Activated CD4-positive, alpha-beta T cell treated with anti-CD3 and anti-CD28 coated beads for 36 hours (primary cell): ENCODE measurements at regions of chr6 and their contacts with region 1.

Region 1: DNA sequence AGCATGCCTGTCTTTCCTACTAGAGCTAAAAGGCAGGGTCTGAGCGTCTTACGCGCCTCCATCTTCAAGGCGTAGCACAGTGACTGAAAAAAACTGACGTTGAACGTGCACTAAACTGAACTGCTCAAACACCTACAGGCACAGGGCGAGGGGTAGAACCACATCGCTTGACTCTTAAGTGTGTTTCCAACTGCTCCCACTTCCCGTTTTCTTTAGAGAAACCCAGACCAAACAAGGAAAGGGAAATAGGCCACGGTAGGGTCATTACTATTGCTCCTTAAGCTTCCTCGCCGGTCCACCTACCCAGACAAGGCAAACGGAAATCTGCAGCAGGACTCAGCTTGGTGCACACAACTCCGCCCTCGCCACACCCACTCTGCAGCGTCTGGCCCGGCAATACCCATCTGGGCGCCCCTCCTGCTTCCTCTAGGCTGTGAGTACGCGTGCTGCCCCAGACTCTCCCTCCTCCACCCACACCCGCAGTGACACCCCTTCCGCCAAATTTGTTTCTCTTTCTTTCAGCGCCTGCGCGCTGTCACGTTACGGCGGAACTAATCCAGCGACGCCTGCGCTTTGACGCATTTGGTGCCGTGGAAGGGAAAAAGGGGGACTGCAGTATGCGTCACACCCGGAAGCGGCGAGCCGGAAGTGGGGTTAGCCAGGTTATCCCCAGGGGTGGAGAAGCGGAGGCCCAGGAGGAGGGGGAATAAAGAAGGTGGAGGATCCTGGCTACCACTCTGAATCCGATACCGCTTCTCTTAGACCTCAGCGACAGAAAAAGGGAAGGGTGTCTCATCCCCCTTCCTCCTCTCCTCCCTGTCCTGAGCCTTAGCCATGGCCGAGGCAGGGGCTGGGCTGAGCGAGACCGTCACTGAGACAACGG is at the start of gene PPP1R11:
- DNase-seq: peak; percentile 99
- ATAC-seq: peak; percentile 98
- H3K4me3 Mint-ChIP-seq: peak within 1 kb of the TSS; percentile 86
- H3K27ac Mint-ChIP-seq: peak within 1 kb of the TSS; percentile 97
- H3K4me1 Mint-ChIP-seq: peaks cover 53% of the 10 kb centered on the region
- H3K27me3 Mint-ChIP-seq: peaks cover 7% of the 10 kb centered on the region
- total RNA-seq, gene PPP1R11: 47.8 to 59.9 TPM

Region 2: DNA sequence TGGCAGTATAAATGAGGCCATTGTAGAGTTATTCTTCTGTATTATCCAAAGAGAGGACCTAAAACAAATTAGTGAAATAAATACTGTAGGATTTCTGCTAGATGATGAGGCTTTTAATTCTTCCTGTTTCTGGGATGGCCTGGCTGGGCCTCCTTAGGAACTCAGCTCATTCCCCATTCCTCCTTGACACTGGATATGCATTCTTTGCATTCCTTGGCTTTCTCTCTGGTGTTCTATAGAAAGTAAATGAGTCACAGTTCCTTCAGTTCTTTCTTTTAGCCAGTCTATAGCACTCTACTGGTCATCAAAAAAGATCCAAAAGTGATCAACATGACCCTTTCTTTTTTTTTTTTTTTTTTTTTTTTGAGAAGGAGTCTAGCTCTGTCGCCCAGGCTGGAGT is 619.1 kb before region 1 on chr6:
- CTCF ChIA-PET with region 1: no interaction called
- POLR2A ChIA-PET with region 1: no interaction called
- intact Hi-C with region 1: no loop called
- DNase-seq: no peak
- ATAC-seq: no peak
- H3K4me3 Mint-ChIP-seq: no peak overlapping the region
- H3K27ac Mint-ChIP-seq: no peak overlapping the region
- H3K4me1 Mint-ChIP-seq: no peaks in the 10 kb centered on the region
- H3K27me3 Mint-ChIP-seq: peaks cover 55% of the 10 kb centered on the region

Region 3: DNA sequence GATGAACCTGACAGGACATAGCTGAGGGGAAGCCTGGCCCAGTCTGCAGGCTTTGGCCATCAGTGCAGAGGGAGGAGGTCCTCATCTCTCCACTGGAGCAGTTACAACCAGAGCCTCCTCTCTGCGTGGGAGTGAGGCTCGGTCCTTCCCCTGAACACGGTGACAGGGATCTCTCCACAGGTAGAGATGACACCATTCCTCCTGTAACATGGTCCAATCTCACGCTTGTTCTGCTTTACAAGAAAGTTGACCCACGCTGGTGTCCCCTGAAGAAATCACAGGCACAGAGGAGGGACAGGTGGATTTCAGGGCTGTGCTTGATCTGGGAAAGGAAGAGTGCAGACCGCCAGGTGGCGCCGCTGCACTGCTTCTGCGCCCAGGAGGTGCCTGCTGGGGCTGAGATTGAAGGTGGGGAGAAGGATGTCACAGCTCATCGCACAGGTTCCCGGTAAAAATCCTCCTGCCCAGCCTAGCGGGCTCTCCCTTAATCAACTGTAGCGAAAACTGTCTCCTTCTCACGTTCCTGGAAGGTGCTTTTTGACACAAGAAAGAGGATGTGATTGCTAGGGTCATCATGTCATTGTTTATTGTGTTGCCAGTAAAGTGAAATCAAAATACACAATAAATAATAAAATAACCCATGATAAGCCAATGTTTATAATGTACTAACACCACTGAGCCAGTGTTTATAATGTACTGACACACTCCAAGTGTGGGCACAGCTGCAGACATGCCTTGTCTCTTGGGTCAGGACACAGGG is 218.8 kb before region 1 on chr6:
- CTCF ChIA-PET with region 1: no interaction called
- POLR2A ChIA-PET with region 1: no interaction called
- intact Hi-C with region 1: loop called in 1 of 2 experiments (anchors 1 kb)
- DNase-seq: peak; percentile 91
- ATAC-seq: peak; percentile 74
- H3K4me3 Mint-ChIP-seq: no peak overlapping the region
- H3K27ac Mint-ChIP-seq: no peak overlapping the region
- H3K4me1 Mint-ChIP-seq: peaks cover 25% of the 10 kb centered on the region
- H3K27me3 Mint-ChIP-seq: peaks cover 44% of the 10 kb centered on the region

Region 4: DNA sequence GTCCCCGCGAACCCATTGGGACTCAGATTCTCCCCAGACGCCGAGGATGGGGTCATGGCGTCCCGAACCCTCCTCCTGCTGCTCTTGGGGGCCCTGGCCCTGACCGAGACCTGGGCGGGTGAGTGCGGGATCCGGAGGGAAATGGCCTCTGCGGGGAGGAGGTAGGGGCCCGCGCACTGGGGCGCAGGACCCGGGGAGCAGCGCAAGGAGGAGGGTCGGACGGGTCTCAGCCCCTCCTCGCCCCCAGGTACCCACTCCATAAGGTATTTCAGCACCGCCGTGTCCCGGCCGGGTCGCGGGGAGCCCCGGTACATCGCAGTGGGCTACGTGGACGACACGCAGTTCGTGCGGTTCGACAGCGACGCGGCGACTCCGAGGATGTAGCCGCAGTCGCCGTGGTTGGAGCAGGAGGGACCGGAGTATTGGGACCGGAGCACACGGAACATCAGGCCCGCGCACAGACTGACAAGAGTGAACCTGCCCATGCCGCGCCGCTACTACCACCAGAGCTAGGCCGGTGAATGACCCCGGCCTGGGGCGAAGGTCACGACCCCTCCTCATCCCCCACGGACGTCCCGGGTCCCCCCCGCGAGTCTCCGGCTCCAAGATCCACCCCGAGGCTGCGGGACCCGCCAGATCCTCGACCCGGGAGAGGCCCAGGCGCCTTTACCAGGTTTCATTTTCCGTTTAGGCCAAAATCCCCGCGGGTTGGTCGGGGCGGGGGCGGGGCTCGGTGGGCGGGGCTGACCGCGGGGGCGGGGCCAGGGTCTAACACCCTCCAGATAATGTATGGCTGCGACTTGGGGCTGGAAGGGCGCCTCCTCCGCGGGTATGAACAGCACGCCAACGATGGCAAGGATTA is 140.2 kb before region 1 on chr6:
- CTCF ChIA-PET with region 1: no interaction called
- POLR2A ChIA-PET with region 1: no interaction called
- intact Hi-C with region 1: loop called in 1 of 2 experiments (anchors 2 kb)
- DNase-seq: peak; percentile 92
- ATAC-seq: peak; percentile 91
- H3K4me3 Mint-ChIP-seq: peak overlapping the region; percentile 82
- H3K27ac Mint-ChIP-seq: peak overlapping the region; percentile 94
- H3K4me1 Mint-ChIP-seq: peaks cover 32% of the 10 kb centered on the region
- H3K27me3 Mint-ChIP-seq: no peaks in the 10 kb centered on the region

Region 5: DNA sequence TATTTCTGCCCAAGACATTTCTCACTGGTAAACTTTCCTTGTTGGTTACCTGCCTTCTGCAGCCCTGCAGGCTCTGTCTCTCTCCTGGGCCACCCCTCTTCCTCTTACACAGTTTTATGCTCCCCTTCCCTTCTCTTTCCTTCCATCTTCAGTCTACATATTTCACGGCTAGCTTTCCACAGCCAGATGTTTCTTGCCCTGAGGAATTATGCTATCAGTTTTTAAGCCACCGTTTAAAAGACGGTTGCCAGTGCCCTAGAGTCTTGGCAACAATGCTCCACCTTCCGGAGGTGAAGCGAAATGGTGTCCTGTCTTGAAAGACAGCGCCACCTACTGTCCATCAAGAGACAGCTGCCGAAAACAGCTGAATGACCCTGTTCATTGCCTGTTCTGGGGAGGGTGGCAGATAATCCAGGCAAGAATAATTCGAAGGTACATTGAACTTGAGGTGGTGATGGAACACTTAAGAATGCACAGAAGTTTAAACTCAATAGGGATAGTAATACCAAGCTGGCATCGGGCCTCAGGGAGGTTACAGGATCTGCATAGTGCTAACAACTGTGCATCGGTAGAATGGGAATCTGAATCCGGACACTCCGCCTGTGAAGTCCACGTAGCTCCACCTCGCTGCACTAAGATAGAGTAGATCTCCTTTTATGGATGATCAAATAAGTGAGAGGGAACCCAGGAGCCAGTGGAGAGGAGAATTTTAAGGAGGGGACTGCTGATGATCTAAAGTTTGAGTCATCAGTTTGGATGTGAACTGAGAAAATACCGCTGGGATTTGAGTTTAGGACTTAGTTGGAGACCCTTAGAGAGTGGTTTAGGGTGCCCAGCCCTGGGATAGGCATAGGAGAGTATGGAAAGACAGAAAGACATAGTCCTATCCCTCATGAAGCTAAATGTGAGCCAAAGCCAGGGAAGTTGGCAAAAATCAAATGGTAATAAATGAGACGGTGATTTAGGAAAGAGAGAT is 64.4 kb after region 1 on chr6:
- CTCF ChIA-PET with region 1: interaction called, 4 read pairs
- POLR2A ChIA-PET with region 1: interaction called, 3 read pairs
- intact Hi-C with region 1: loop called in 1 of 2 experiments (anchors 2 kb)
- DNase-seq: peak; percentile 79
- ATAC-seq: peak; percentile 90
- H3K4me3 Mint-ChIP-seq: no peak overlapping the region
- H3K27ac Mint-ChIP-seq: no peak overlapping the region
- H3K4me1 Mint-ChIP-seq: peaks cover 27% of the 10 kb centered on the region
- H3K27me3 Mint-ChIP-seq: peaks cover 62% of the 10 kb centered on the region

Region 6: DNA sequence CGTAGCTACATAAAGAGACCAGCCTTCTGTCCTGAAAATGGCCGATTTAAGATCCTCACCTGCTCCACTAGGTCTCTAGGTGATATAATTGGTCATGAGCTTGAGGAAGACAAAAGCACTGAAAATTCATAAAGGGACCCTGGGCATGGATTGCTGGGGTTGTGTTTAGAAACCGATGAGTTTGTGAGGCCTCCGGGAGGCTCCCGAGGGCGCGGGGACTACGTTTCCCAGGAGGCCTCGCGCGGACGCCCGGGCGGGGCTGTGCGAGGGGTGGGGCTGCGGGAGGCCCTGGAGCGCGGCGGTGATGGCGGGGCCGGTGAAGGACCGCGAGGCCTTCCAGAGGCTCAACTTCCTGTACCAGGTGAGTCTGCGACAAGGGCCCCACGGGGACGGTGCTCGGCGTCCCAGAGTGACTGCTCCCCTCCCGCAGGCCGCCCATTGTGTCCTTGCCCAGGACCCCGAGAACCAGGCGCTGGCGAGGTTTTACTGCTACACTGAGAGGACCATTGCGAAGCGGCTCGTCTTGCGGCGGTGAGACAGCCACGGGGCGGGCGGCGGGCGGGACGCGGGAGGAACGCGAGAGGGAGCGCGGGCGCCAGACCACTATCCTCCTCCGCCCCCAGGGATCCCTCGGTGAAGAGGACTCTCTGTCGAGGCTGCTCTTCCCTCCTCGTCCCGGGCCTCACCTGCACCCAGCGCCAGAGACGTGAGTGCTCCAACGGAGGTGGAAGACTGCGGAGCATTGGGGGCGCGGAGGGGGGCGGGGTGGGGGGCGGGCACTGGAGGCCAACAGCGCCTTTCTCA is 278.3 kb after region 1 on chr6 and contains the start of gene RPP21:
- CTCF ChIA-PET with region 1: no interaction called
- POLR2A ChIA-PET with region 1: no interaction called
- intact Hi-C with region 1: loop called in 1 of 2 experiments (anchors 1 kb)
- DNase-seq: peak; percentile 94
- ATAC-seq: peak; percentile 96
- H3K4me3 Mint-ChIP-seq: peak within 1 kb of the TSS; percentile 85
- H3K27ac Mint-ChIP-seq: peak within 1 kb of the TSS; percentile 84
- H3K4me1 Mint-ChIP-seq: peaks cover 41% of the 10 kb centered on the region
- H3K27me3 Mint-ChIP-seq: peaks cover 2% of the 10 kb centered on the region
- total RNA-seq, gene RPP21: 32.6 to 38.1 TPM

Region 7: GRCh38 chr6:30686908-30687658 is 620.3 kb after region 1 on chr6:
- CTCF ChIA-PET with region 1: no interaction called
- POLR2A ChIA-PET with region 1: no interaction called
- intact Hi-C with region 1: loop called in 1 of 2 experiments (anchors 10 kb)
- DNase-seq: peak; percentile 90
- ATAC-seq: peak; percentile 20
- H3K4me3 Mint-ChIP-seq: peak overlapping the region; percentile 100
- H3K27ac Mint-ChIP-seq: peak overlapping the region; percentile 89
- H3K4me1 Mint-ChIP-seq: peaks cover 42% of the 10 kb centered on the region
- H3K27me3 Mint-ChIP-seq: no peaks in the 10 kb centered on the region